Sigmoid colon (tissue), 7 donors: ENCODE measurements at regions of chr13 and their contacts with region 1.

Region 1: GRCh38 chr13:27980280-27980998 is 8.1 kb downstream of the URAD start:
- DNase-seq: no peak
- H3K4me3 ChIP-seq: no peak overlapping the region
- H3K27ac ChIP-seq: no peak overlapping the region
- H3K4me1 ChIP-seq: peaks cover 0 to 40% (median 29%) of the 10 kb centered on the region in 4 donors
- H3K27me3 ChIP-seq: peaks cover 49 to 97% (median 87%) of the 10 kb centered on the region in 3 donors
- CTCF ChIP-seq: no peak
- EP300 ChIP-seq: no peak
- POLR2A ChIP-seq: no peak

Region 2: GRCh38 chr13:26946684-26947343 is 1033.6 kb before region 1 on chr13:
- intact Hi-C with region 1: loop called (anchors 10 kb)
- DNase-seq: no peak
- H3K4me3 ChIP-seq: no peak overlapping the region
- H3K27ac ChIP-seq: no peak overlapping the region
- H3K4me1 ChIP-seq: peaks cover 0 to under 1% (median 0%) of the 10 kb centered on the region in 4 donors
- H3K27me3 ChIP-seq: peaks cover 0 to 7% (median 0%) of the 10 kb centered on the region in 3 donors
- CTCF ChIP-seq: peak; percentile 86 to 91 (median 90)
- EP300 ChIP-seq: no peak
- POLR2A ChIP-seq: no peak

Region 3: DNA sequence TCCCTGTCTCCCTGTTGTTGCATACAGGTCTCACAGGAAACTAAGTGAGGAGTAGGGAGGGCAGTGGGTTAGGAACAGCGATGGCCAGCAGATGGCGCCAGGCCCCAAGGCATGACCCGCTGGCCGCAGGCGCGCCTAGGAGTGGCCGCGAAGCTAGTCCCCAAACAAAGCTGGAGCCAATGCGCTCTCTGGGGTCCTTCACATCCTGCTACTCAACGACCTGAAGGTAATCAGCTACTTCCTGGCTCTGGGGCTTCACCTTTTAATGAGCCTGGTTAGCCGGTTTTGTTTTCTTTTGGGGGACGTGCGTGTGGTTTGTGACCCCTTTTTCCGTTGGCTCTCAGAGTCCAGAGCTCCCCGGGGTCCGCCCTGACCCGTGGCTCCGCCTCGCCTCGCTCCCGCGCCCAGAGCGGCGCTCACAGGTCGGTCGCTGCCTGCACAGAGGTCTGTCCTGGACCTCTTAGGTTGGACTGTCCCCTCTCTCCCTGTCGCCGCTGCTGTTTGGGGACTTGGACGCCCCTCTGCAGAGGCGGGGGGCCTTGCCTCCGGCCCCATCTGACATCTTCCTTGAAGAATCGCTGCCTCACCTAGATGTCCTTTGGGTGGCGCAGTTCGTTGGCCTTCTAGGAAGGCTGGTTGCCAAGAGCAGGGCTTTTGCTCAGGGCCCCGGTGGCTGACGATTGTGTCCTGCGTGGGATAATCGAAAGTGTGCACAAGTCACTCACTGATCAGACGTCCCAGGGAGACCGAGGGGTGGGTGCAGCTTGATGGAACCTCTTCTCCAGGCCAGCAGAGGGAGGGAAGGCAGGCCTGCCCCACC is 618.2 kb before region 1 on chr13:
- intact Hi-C with region 1: loop called (anchors 1 kb)
- DNase-seq: peak; percentile 91
- H3K4me3 ChIP-seq: peak overlapping the region; percentile 18 to 54 (median 46)
- H3K27ac ChIP-seq: peak overlapping the region in 1 of 4 donors; percentile 37
- H3K4me1 ChIP-seq: peaks cover 0 to 17% (median 12%) of the 10 kb centered on the region in 4 donors
- H3K27me3 ChIP-seq: peaks cover 0 to 7% (median 0%) of the 10 kb centered on the region in 3 donors
- CTCF ChIP-seq: peak; percentile 75 to 91 (median 84)
- EP300 ChIP-seq: no peak
- POLR2A ChIP-seq: no peak

Region 4: DNA sequence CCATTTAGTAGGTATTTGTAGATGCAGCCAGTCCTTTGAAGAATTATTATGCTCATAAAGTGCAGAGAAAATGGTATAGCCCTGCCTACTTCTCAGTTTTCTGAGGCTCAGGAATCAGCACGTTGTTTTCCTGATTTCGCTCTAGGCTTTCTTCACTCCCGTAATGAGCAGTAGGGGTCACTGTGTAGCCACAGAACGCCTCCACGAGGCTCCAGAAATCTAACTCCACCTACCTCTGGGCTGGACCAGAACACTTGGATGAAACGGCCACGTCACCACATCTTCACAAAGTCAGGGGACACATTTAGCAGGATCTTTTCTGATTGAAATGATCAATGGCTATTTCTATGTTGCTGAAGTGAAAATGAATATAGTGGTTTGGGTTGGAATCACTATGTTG is 605.8 kb before region 1 on chr13:
- intact Hi-C with region 1: loop called (anchors 5 kb)
- DNase-seq: peak; percentile 78
- H3K4me3 ChIP-seq: no peak overlapping the region
- H3K27ac ChIP-seq: no peak overlapping the region
- H3K4me1 ChIP-seq: peaks cover 0 to 10% (median 6%) of the 10 kb centered on the region in 4 donors
- H3K27me3 ChIP-seq: peaks cover 0 to 27% (median 0%) of the 10 kb centered on the region in 3 donors
- CTCF ChIP-seq: peak; percentile 50 to 74 (median 71)
- EP300 ChIP-seq: no peak
- POLR2A ChIP-seq: no peak

Region 5: DNA sequence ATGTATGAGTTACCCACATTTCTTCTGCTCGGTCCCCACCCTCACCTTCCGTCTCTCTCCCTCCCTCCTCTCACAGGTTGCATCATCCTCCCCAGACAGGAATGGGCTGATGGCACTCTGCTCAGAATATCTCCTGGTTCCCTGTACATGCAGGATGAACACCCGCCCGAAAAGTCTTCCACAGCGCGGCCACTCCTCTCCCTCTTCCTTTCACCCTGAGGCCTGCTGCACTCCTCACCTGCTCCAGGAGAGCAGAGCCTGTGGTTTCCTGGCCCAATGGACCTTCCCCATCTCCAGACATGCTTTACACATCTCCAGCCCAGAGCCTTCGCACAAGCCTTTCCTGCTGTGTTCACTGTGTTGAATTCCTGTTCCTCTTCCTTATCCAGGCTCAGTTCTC is 147.2 kb before region 1 on chr13:
- intact Hi-C with region 1: loop called (anchors 2 kb)
- DNase-seq: peak; percentile 13
- H3K4me3 ChIP-seq: no peak overlapping the region
- H3K27ac ChIP-seq: no peak overlapping the region
- H3K4me1 ChIP-seq: peaks cover 0 to 7% (median 6%) of the 10 kb centered on the region in 4 donors
- H3K27me3 ChIP-seq: peaks cover 0 to 54% (median 18%) of the 10 kb centered on the region in 3 donors
- CTCF ChIP-seq: no peak
- EP300 ChIP-seq: no peak
- POLR2A ChIP-seq: no peak